Activated CD4-positive, alpha-beta T cell treated with anti-CD3 and anti-CD28 coated beads, Interleukin-2, amount 10 ng/mL, durations not matched to agents 24 days and 14 days (primary cell): ENCODE measurements at regions of chr7 and their contacts with region 1.

Region 1: GRCh38 chr7:3461923-3462322 is 160.9 kb downstream of the SDK1 start:
- DNase-seq: peak; percentile 92
- H3K4me3 Mint-ChIP-seq: peak overlapping the region; percentile 76
- H3K27ac Mint-ChIP-seq: peak overlapping the region; percentile 81
- H3K4me1 Mint-ChIP-seq: peaks cover 27% of the 10 kb centered on the region
- H3K27me3 Mint-ChIP-seq: no peaks in the 10 kb centered on the region

Region 2: GRCh38 chr7:2956526-2957368 is 505.2 kb before region 1 on chr7:
- intact Hi-C with region 1: no loop called
- DNase-seq: peak; percentile 80
- H3K4me3 Mint-ChIP-seq: peak overlapping the region; percentile 55
- H3K27ac Mint-ChIP-seq: peak overlapping the region; percentile 87
- H3K4me1 Mint-ChIP-seq: peaks cover 60% of the 10 kb centered on the region
- H3K27me3 Mint-ChIP-seq: no peaks in the 10 kb centered on the region

Region 3: GRCh38 chr7:3399858-3400257 is 62.1 kb before region 1 on chr7:
- intact Hi-C with region 1: loop called (anchors 10 kb)
- DNase-seq: peak; percentile 62
- H3K4me3 Mint-ChIP-seq: no peak overlapping the region
- H3K27ac Mint-ChIP-seq: no peak overlapping the region
- H3K4me1 Mint-ChIP-seq: no peaks in the 10 kb centered on the region
- H3K27me3 Mint-ChIP-seq: peaks cover 13% of the 10 kb centered on the region

Region 4: GRCh38 chr7:3493499-3493898 is 31.6 kb after region 1 on chr7:
- intact Hi-C with region 1: loop called (anchors 2 kb)
- DNase-seq: no peak
- H3K4me3 Mint-ChIP-seq: no peak overlapping the region
- H3K27ac Mint-ChIP-seq: no peak overlapping the region
- H3K4me1 Mint-ChIP-seq: peaks cover 9% of the 10 kb centered on the region
- H3K27me3 Mint-ChIP-seq: peaks cover 3% of the 10 kb centered on the region

Region 5: DNA sequence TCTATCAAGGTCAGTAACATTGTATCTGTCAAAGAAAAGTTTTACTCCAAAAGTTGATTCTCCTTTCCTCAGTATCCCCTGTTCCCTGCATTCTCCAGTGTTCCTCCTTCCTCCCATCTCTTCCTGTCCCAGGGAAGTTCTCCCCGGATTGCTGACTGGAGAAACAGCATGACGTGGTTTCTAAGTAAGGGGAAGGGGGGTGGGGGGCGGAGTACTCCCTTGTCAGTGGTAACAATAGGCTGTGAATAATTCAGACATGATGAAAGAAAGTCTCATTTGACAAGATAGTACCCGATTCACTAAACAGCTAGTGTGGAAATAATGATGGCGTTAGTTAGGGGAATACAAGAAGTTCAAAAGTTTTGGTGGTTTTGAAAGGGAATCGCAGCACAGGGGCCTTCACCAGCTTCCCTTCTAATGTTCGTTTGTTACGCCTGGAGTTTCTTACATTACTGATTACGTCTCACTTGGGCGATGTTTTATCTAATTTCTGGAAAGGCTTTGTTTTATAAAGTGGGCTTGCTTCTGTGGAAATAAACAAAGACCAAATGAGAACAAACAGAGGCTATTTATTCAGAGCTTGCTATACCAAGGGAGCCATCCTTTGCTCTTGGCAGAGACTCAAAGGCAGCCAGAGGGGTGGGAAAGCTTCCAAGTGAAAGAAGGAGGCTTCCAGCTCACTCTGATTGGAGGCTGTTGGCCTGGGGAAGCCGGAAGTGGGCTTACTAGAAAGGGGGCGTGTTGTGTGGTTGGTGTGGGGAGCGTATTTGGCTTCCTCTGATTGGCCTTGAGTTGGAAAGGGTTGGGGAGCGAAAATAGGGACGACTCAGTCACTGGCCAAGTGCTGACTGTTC is 292.8 kb after region 1 on chr7:
- intact Hi-C with region 1: no loop called
- DNase-seq: no peak
- H3K4me3 Mint-ChIP-seq: no peak overlapping the region
- H3K27ac Mint-ChIP-seq: no peak overlapping the region
- H3K4me1 Mint-ChIP-seq: no peaks in the 10 kb centered on the region
- H3K27me3 Mint-ChIP-seq: no peaks in the 10 kb centered on the region